Activated CD4-positive, alpha-beta T cell treated with anti-CD3 and anti-CD28 coated beads for 36 hours (primary cell): ENCODE measurements at regions of chr18 and their contacts with region 1.

Region 1: GRCh38 chr18:830315-830901 is 18.4 kb upstream of the YES1 start:
- DNase-seq: peak; percentile 28
- ATAC-seq: peak; percentile 63
- H3K4me3 Mint-ChIP-seq: peak overlapping the region; percentile 29
- H3K27ac Mint-ChIP-seq: peak overlapping the region; percentile 69
- H3K4me1 Mint-ChIP-seq: peaks cover 27% of the 10 kb centered on the region
- H3K27me3 Mint-ChIP-seq: no peaks in the 10 kb centered on the region

Region 2: GRCh38 chr18:623761-624620 is 206.4 kb before region 1 on chr18:
- CTCF ChIA-PET with region 1: interaction called, 57 read pairs
- POLR2A ChIA-PET with region 1: no interaction called
- intact Hi-C with region 1: loop called (anchors 2 kb)
- DNase-seq: peak; percentile 81
- ATAC-seq: peak; percentile 83
- H3K4me3 Mint-ChIP-seq: no peak overlapping the region
- H3K27ac Mint-ChIP-seq: peak overlapping the region; percentile 10
- H3K4me1 Mint-ChIP-seq: no peaks in the 10 kb centered on the region
- H3K27me3 Mint-ChIP-seq: peaks cover 2% of the 10 kb centered on the region

Region 3: GRCh38 chr18:712401-713134 is 117.8 kb before region 1 on chr18 and contains the start of gene ENOSF1:
- CTCF ChIA-PET with region 1: interaction called, 23 read pairs
- POLR2A ChIA-PET with region 1: interaction called, 4 read pairs
- intact Hi-C with region 1: loop called in 1 of 2 experiments (anchors 1 kb)
- DNase-seq: peak; percentile 95
- ATAC-seq: peak; percentile 91
- H3K4me3 Mint-ChIP-seq: peak within 1 kb of the TSS; percentile 94
- H3K27ac Mint-ChIP-seq: peak within 1 kb of the TSS; percentile 99
- H3K4me1 Mint-ChIP-seq: peaks cover 53% of the 10 kb centered on the region
- H3K27me3 Mint-ChIP-seq: no peaks in the 10 kb centered on the region
- total RNA-seq, gene ENOSF1: 92.6 to 97.4 TPM

Region 4: DNA sequence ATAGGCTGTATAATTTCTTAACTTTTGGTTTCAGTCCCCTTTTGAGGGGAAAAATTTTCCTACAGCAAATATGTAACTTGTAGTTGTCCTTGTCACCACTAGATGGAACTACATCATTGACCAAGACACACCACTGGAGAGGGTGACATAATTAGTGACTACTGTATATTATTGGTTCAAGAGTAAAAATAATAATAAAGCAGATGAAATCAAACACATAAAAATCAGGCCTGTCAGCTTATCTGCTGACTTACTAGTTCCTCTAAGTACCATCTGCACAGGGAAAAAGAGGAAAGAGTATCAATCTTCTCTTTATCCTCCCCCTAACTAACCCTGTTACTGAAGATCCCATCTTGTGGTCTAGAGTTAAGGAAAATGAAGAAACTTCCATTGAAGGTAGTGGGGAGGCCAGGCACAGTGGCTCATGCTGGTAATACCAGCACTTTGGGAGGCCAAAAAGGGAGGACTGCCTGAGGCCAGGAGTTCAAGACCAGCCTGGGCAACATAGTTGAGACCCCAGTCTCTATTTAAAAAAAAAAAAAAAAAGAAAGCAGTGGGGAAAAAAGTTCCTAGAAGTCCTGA is 88.4 kb before region 1 on chr18:
- CTCF ChIA-PET with region 1: interaction called, 155 read pairs
- POLR2A ChIA-PET with region 1: no interaction called
- intact Hi-C with region 1: loop called (anchors 1 kb)
- DNase-seq: no peak
- ATAC-seq: peak; percentile 68
- H3K4me3 Mint-ChIP-seq: no peak overlapping the region
- H3K27ac Mint-ChIP-seq: no peak overlapping the region
- H3K4me1 Mint-ChIP-seq: no peaks in the 10 kb centered on the region
- H3K27me3 Mint-ChIP-seq: no peaks in the 10 kb centered on the region

Region 5: GRCh38 chr18:805008-805754 is 25.2 kb before region 1 on chr18:
- CTCF ChIA-PET with region 1: interaction called, 20 read pairs
- POLR2A ChIA-PET with region 1: interaction called, 4 read pairs
- intact Hi-C with region 1: no loop called
- DNase-seq: no peak
- ATAC-seq: peak; percentile 25
- H3K4me3 Mint-ChIP-seq: peak overlapping the region; percentile 43
- H3K27ac Mint-ChIP-seq: peak overlapping the region; percentile 40
- H3K4me1 Mint-ChIP-seq: peaks cover 60% of the 10 kb centered on the region
- H3K27me3 Mint-ChIP-seq: no peaks in the 10 kb centered on the region